A549 (cell line): ENCODE measurements at regions of chr9 and their contacts with region 1.

Region 1: GRCh38 chr9:126860077-126860756 is at the start of gene ZBTB34:
- DNase-seq: peak; percentile 31 to 53
- ATAC-seq: peak; percentile 83
- H3K4me3 ChIP-seq: peak within 1 kb of the TSS; percentile 75
- H3K27ac ChIP-seq: peak within 1 kb of the TSS; percentile 97 to 98
- H3K4me1 ChIP-seq: peaks cover 18% of the 10 kb centered on the region
- CTCF ChIP-seq: peak; percentile 98
- EP300 ChIP-seq: no peak
- POLR2A ChIP-seq: peak; percentile 48
- RAD21 ChIP-seq: peak in 1 of 2 experiments; percentile 41; a peak in 2 of 5 replicates
- polyA plus RNA-seq, gene ZBTB34: 6.4 and 6.6 TPM in 2 replicates

Region 2: GRCh38 chr9:126745574-126746411 is 114.4 kb before region 1 on chr9:
- CTCF ChIA-PET with region 1: no interaction called
- POLR2A ChIA-PET with region 1: no interaction called
- DNase-seq: no peak
- ATAC-seq: no peak; a peak in 1 of 6 replicates
- H3K4me3 ChIP-seq: no peak overlapping the region
- H3K27ac ChIP-seq: no peak overlapping the region
- H3K4me1 ChIP-seq: no peaks in the 10 kb centered on the region
- CTCF ChIP-seq: no peak
- EP300 ChIP-seq: no peak
- POLR2A ChIP-seq: no peak
- RAD21 ChIP-seq: no peak

Region 3: DNA sequence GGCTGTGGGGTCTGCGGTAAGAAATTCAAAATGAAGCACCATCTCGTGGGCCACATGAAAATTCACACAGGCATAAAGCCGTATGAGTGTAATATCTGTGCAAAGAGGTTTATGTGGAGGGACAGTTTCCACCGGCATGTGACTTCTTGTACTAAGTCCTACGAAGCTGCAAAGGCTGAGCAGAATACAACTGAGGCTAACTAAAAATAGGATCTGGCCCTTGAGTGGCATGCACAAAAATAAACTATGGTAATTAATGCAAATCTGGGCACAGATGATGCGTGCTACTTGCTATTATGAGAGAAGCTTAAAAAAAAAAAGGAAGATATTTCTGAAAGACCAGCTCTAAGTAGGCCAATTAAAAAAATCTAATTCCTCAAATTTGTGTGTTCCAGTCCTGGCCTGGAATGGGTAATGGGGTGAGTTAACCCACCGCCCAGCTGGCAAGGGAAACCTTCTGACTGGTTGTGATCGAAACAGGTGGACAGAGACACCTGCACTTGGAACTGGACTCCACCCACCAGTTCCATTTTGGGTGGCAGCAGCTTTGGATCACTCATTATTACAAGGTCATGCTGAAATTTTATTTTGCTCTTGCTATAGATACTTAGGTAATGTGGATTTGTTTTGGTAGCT is 26.4 kb before region 1 on chr9:
- CTCF ChIA-PET with region 1: interaction called, 11 read pairs
- POLR2A ChIA-PET with region 1: no interaction called
- DNase-seq: no peak
- ATAC-seq: no peak
- H3K4me3 ChIP-seq: no peak overlapping the region
- H3K27ac ChIP-seq: no peak overlapping the region
- H3K4me1 ChIP-seq: no peaks in the 10 kb centered on the region
- CTCF ChIP-seq: no peak
- EP300 ChIP-seq: no peak
- POLR2A ChIP-seq: no peak
- RAD21 ChIP-seq: no peak

Region 4: GRCh38 chr9:126844085-126844484 is 16.1 kb before region 1 on chr9:
- CTCF ChIA-PET with region 1: interaction called, 36 read pairs
- POLR2A ChIA-PET with region 1: no interaction called
- DNase-seq: no peak
- ATAC-seq: peak in 1 of 2 experiments; percentile 69; a peak in 3 of 6 replicates
- H3K4me3 ChIP-seq: no peak overlapping the region
- H3K27ac ChIP-seq: peak overlapping the region in 1 of 2 experiments; percentile 21; a peak in 1 of 6 replicates
- H3K4me1 ChIP-seq: peaks cover 9% of the 10 kb centered on the region
- CTCF ChIP-seq: no peak
- EP300 ChIP-seq: no peak
- POLR2A ChIP-seq: no peak
- RAD21 ChIP-seq: no peak